ENCODE measurements at regions of chr9 and their contacts with region 1.

Region 1: GRCh38 chr9:98263482-98264357 is 8.3 kb upstream of the TBC1D2 start:
- DNase-seq: peak; percentile 84
- ATAC-seq: peak; percentile 88

Region 2: GRCh38 chr9:97705354-97705950 is 558.3 kb before region 1 on chr9:
- intact Hi-C with region 1: loop called (anchors 5 kb)
- DNase-seq: no peak
- ATAC-seq: no peak

Region 3: DNA sequence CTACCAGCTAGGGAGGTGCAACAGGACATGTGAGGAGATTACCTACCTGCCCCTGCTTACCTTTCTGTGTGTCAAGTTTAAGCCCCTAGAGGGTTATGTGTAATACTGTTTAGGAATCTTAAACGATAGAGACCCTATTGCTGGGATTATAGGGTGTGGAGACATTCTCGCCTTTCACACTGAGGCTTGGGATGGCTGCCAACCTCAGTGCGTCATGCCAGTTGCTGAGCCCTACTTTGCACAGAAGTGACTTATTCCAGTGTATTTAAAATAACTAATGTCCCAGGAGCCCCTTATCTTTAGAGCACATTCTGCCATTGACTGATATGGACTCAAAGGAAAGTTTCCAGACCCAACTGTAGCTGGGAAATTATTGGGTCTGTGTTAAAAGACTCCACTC is 490.0 kb before region 1 on chr9:
- intact Hi-C with region 1: no loop called
- DNase-seq: no peak
- ATAC-seq: no peak

Region 4: DNA sequence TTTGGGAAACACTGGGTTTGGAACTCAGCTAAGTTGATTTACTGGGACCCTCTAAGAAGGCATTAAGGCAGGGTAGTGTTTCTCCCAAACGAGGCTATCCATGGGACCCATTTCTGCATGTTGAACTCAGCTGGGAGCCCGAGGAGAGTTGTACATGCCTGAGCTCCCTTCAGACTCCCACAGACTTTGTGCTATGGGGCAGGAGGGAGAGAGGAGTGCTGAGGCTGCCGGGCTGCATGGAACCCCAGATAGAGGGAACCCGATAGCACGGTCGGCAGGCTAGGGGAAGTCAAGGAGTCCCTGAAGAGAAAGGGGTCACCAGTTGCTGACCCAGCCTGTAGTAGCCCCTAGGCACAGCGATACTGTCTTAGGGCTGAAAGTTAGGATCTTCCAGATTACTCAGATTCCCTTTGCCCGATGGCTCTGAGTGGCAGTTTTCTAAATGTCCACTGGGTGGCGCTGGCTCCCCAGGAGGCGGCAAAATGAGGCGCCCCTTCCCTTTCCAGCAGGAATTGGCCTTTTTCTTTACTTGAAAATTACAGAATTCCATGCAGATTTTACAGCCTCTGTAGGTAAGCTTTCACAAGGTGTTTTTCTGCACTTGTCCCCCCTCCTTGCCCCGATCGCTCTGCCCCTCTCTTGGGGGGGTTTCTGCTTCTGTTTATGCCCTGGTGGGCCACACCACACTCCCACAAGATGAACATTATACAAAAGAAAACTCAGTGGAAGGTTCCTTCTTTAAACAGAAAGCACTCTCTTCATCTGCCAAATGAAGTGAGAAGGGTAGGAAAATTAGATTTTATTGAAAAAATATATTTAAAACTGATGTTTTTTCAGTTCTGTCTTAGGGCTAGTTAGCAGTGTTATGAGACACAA is 189.4 kb before region 1 on chr9:
- intact Hi-C with region 1: loop called (anchors 2 kb)
- DNase-seq: no peak
- ATAC-seq: peak; percentile 56

Region 5: DNA sequence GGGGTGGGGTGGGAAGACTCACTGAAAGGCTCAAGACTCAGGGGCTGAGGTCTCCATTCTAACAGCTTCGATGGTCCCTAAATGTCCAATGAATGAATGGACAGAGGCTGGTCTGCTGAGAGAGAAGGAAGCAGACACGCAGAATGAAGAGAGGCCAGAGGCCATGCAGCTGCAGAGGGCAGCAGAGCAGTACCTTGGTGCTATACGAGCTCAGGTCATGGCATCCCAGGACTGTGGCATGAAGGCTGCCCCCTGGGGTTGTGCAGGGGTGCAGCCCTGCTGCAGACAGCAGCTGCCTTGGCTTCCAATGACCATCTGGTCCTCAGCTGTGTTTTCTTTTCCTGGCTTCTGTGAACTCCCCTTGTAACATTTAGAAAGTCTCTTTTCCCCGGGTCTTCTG is 56.1 kb before region 1 on chr9:
- intact Hi-C with region 1: loop called (anchors 1 kb)
- DNase-seq: no peak
- ATAC-seq: no peak

Region 6: DNA sequence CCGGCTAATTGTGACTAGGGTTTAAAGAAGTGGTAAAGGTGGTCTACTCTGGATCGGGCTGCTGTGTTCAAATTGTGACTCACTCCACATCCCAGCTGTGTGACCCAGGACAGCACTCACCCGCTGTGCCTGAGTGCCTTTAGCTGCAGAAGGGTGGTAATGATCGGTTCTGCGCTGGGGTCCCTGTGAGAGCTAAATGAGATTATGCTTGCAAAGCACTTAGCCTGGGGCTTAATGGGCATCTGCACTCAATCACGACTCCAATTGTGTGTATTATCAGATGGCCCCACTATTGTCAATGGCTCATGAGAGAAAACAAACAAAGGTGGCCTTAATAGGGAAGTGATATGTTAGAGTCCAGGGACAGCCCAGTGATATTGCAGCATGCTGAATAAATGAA is 16.9 kb after region 1 on chr9:
- intact Hi-C with region 1: no loop called
- DNase-seq: no peak
- ATAC-seq: no peak

Region 7: GRCh38 chr9:98899408-98900056 is 635.8 kb after region 1 on chr9:
- intact Hi-C with region 1: no loop called
- DNase-seq: no peak
- ATAC-seq: no peak

Region 8: GRCh38 chr9:99660191-99660708 is 1396.5 kb after region 1 on chr9:
- intact Hi-C with region 1: no loop called
- DNase-seq: no peak
- ATAC-seq: peak; percentile 44